Body of pancreas (tissue), 4 donors: ENCODE measurements at regions of chr6 and their contacts with region 1.

Region 1: DNA sequence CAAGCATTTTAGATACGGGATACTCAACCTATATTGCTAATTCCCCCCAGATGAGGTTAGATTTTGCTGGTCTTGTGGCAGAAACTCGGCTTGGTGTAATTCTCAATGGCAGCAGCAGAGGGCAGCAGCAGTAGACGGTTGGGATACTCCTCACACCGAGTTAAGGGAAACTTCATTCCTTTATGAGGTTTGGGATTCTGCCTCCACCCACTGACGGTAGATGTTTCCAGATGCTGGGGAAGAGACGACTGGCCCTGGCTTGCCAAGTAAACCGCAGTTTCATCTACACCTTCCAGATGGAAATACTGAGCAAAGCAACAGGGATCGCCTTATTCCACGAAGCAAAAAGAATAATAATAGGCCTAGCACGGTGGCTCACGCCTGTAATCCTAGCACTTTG is 8.2 kb upstream of the TBC1D7 start:
- DNase-seq: peak; percentile 66 to 88 (median 84)
- ATAC-seq: peak; percentile 84
- H3K4me3 ChIP-seq: no peak overlapping the region
- H3K27ac ChIP-seq: no peak overlapping the region
- H3K4me1 ChIP-seq: no peaks in the 10 kb centered on the region
- H3K27me3 ChIP-seq: no peaks in the 10 kb centered on the region
- CTCF ChIP-seq: peak; percentile 71 to 96 (median 92)
- POLR2A ChIP-seq: no peak

Region 2: DNA sequence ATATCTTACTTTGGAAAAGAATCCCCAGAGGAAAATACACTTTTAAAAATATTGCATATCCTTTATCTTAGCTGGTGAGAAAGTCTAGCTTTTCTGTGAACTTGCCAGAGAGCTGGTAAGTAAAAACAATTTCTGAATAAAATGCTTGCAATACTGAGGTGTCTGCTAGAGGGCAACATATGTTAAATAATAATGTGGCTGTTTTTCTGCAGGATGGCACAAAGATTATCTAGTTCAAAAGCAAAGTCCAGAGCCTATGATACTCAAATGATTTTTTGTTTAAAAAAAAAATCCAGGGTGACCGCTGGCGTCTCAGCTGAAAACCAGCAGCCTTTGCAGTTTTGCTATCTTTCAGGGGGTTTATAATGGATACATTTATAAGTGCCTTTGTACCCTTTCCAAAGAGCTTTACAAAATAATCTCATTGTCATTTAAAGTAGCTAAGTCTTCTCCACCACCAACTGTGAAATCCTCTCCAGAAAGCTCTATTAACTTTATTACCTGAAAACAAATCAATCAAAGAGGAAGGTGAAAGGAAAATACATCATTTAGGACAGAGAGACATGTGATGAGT is 425.1 kb before region 1 on chr6:
- intact Hi-C with region 1: loop called (anchors 5 kb)
- DNase-seq: no peak
- ATAC-seq: peak; percentile 47
- H3K4me3 ChIP-seq: no peak overlapping the region
- H3K27ac ChIP-seq: no peak overlapping the region
- H3K4me1 ChIP-seq: no peaks in the 10 kb centered on the region
- H3K27me3 ChIP-seq: no peaks in the 10 kb centered on the region
- CTCF ChIP-seq: peak in 6 of 7 experiments; percentile 48 to 76 (median 64)
- POLR2A ChIP-seq: no peak

Region 3: DNA sequence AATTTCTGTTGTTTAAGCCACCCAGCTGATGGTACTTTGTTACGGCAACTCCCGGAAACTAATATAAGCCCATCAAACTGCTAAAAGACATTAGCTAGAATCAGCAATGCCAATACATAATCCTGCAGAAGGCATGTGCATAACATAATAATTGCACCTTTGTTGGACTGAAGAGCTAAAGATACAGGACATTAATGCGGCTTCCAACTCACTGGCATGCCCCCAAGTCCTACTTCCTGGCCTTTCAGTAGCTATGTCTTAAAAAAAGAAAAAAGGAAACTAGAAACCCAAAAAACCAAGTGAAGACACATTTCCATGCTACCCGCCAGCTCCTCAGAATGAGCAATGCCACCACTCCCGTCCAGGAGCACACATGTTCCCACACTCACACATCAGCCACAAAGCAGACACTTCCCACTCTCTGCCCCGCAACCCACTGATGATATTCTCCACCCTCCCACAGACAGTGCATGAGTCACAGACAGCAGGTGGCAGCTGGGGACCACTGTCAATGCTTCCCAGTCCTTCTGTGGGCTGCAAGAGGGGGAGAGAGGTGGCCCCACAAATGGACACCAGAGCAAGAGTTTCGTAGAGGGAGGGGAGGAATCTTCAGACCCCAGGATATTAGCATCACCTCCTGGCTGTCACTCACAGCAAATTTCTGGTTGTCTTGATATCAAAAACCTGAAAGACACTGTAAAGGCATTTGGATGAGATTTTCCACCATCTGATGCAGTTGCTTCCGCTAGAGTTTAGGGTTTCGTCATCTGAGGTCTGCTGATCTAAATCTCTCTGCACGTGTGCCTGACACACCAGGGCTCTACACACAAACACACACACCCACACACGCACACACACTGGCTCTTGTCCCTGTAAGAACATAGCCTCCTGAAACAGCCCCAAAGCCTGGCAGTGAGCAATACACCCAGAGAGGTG is 118.0 kb after region 1 on chr6:
- intact Hi-C with region 1: no loop called
- DNase-seq: peak in 1 of 4 donors; percentile 55
- ATAC-seq: no peak
- H3K4me3 ChIP-seq: no peak overlapping the region
- H3K27ac ChIP-seq: peak overlapping the region in 2 of 4 donors; percentile 3 to 42
- H3K4me1 ChIP-seq: peaks cover 8% of the 10 kb centered on the region
- H3K27me3 ChIP-seq: no peaks in the 10 kb centered on the region
- CTCF ChIP-seq: peak in 1 of 7 experiments; percentile 7
- POLR2A ChIP-seq: no peak

Region 4: GRCh38 chr6:13574149-13574570 is 237.6 kb after region 1 on chr6:
- intact Hi-C with region 1: loop called (anchors 10 kb)
- DNase-seq: peak; percentile 91 to 96 (median 94)
- ATAC-seq: peak; percentile 93
- H3K4me3 ChIP-seq: peak overlapping the region; percentile 55 to 58
- H3K27ac ChIP-seq: peak overlapping the region; percentile 97 to 99 (median 98)
- H3K4me1 ChIP-seq: peaks cover 8% of the 10 kb centered on the region
- H3K27me3 ChIP-seq: no peaks in the 10 kb centered on the region
- CTCF ChIP-seq: peak in 6 of 7 experiments; percentile 34 to 71 (median 48)
- POLR2A ChIP-seq: no peak